ENCODE measurements at regions of chr17 and their contacts with region 1.

Region 1: GRCh38 chr17:75779231-75779986 is 5.2 kb upstream of the UNK start:
- DNase-seq: peak; percentile 97
- H3K4me3 Mint-ChIP-seq: peak overlapping the region; percentile 87
- H3K27ac Mint-ChIP-seq: peak overlapping the region; percentile 97
- H3K4me1 Mint-ChIP-seq: peaks cover 43% of the 10 kb centered on the region
- H3K27me3 Mint-ChIP-seq: peaks cover 4% of the 10 kb centered on the region

Region 2: DNA sequence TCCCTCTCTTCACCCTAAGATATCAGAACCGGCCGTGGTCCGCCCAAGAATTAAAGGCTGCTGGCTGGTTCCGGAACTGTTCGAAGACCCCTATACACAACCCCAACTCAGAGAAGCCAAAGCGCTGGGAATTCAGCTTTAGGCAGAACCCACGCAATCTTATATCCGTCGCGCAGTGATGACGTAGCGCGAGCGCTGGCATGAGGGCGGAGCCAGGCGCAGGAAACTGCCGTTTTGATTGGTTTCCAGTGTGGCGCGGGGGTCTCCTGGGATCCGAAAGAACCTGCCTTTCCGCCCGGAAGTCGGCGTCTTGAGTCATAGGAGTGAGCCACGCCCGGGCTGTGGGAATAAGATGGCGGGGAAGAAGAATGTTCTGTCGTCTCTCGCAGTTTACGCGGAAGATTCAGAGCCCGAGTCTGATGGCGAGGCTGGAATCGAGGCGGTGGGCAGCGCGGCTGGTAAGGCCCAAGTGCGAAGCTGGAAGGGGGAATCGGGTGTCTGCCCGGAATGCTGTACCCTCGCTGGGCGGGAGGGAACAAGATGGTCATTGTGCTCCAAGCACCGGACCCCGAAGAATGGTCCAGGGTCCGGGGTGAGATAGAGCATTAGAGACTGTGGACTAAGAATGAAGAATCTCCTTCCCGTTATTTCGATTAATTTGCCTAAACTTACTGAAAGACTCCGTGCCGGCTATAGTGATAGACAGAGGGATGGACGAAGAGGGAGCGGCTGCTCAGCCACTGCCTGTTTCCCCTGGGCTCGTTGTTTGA is 112.2 kb before region 1 on chr17 and contains the starts of genes RECQL5 and SAP30BP:
- CTCF ChIA-PET with region 1: no interaction called
- POLR2A ChIA-PET with region 1: interaction called, 3 read pairs
- intact Hi-C with region 1: loop called (anchors 1 kb)
- DNase-seq: peak; percentile 98
- H3K4me3 Mint-ChIP-seq: peak within 1 kb of the TSS; percentile 47
- H3K27ac Mint-ChIP-seq: no peak within 1 kb of the TSS
- H3K4me1 Mint-ChIP-seq: peaks cover 25% of the 10 kb centered on the region
- H3K27me3 Mint-ChIP-seq: no peaks in the 10 kb centered on the region
- total RNA-seq, gene RECQL5: 27.7 to 31.3 TPM
- total RNA-seq, gene SAP30BP: 81.4 to 92.7 TPM

Region 3: GRCh38 chr17:75689441-75689873 is 90.0 kb before region 1 on chr17:
- CTCF ChIA-PET with region 1: no interaction called
- POLR2A ChIA-PET with region 1: no interaction called
- intact Hi-C with region 1: no loop called
- DNase-seq: peak; percentile 60
- H3K4me3 Mint-ChIP-seq: no peak overlapping the region
- H3K27ac Mint-ChIP-seq: peak overlapping the region; percentile 78
- H3K4me1 Mint-ChIP-seq: peaks cover 64% of the 10 kb centered on the region
- H3K27me3 Mint-ChIP-seq: no peaks in the 10 kb centered on the region

Region 4: GRCh38 chr17:75764711-75765421 is 14.5 kb before region 1 on chr17 and contains the start of gene GALK1:
- CTCF ChIA-PET with region 1: interaction called, 35 read pairs
- POLR2A ChIA-PET with region 1: interaction called, 69 read pairs
- intact Hi-C with region 1: loop called (anchors 1 kb)
- DNase-seq: peak; percentile 83
- H3K4me3 Mint-ChIP-seq: peak within 1 kb of the TSS; percentile 79
- H3K27ac Mint-ChIP-seq: peak within 1 kb of the TSS; percentile 71
- H3K4me1 Mint-ChIP-seq: peaks cover 11% of the 10 kb centered on the region
- H3K27me3 Mint-ChIP-seq: no peaks in the 10 kb centered on the region
- total RNA-seq, gene GALK1: 69.3 to 69.7 TPM

Region 5: GRCh38 chr17:75822119-75822799 is 42.9 kb after region 1 on chr17:
- CTCF ChIA-PET with region 1: interaction called, 10 read pairs
- POLR2A ChIA-PET with region 1: interaction called, 11 read pairs
- intact Hi-C with region 1: no loop called
- DNase-seq: peak; percentile 52
- H3K4me3 Mint-ChIP-seq: no peak overlapping the region
- H3K27ac Mint-ChIP-seq: peak overlapping the region; percentile 69
- H3K4me1 Mint-ChIP-seq: peaks cover 23% of the 10 kb centered on the region
- H3K27me3 Mint-ChIP-seq: no peaks in the 10 kb centered on the region

Region 6: DNA sequence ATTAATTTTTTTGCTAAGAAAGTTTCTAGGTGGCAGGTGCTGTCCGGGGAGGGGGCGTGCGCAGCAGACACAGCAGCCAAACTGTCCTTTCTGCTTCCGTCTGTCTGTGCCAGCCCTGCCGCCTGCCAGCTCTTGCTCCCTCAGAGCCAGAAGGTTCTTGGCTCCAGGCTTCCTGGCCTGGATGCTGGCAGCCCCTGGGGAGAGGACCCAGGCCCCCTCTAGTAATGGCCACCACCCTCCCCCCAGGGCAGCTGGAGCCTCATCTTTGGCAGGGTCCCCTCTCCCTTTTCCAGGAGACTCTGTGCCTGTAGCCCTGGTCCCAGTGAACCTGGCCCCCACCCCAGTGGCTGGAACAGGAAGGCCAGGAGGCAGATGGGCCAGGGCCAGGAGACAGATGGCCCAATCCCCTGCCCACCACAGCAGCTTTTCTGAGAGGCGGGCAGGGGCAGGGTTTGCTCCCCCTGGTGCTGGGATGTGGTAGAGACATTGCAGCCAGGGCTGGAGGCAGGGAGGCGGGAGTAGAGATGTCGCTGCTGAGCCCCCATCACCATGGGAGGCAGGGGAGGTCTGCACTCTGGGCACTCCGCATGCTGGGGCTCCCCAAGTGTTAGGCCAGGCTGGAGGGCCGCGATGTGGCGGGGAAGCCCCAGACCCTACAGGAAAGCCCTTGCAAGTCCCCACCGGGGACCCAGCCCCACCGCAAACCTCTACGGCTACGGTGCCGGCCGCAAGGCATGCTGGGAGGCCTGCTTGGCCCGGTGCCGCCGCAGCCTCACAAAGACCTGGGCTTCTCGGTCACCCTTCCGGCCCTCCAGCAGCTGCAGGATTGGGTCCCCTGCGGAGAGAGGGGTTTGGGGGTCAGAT is 48.1 kb after region 1 on chr17:
- CTCF ChIA-PET with region 1: interaction called, 10 read pairs
- POLR2A ChIA-PET with region 1: interaction called, 11 read pairs
- intact Hi-C with region 1: loop called (anchors 2 kb)
- DNase-seq: peak; percentile 79
- H3K4me3 Mint-ChIP-seq: peak overlapping the region; percentile 46
- H3K27ac Mint-ChIP-seq: peak overlapping the region; percentile 87
- H3K4me1 Mint-ChIP-seq: peaks cover 15% of the 10 kb centered on the region
- H3K27me3 Mint-ChIP-seq: no peaks in the 10 kb centered on the region

Region 7: DNA sequence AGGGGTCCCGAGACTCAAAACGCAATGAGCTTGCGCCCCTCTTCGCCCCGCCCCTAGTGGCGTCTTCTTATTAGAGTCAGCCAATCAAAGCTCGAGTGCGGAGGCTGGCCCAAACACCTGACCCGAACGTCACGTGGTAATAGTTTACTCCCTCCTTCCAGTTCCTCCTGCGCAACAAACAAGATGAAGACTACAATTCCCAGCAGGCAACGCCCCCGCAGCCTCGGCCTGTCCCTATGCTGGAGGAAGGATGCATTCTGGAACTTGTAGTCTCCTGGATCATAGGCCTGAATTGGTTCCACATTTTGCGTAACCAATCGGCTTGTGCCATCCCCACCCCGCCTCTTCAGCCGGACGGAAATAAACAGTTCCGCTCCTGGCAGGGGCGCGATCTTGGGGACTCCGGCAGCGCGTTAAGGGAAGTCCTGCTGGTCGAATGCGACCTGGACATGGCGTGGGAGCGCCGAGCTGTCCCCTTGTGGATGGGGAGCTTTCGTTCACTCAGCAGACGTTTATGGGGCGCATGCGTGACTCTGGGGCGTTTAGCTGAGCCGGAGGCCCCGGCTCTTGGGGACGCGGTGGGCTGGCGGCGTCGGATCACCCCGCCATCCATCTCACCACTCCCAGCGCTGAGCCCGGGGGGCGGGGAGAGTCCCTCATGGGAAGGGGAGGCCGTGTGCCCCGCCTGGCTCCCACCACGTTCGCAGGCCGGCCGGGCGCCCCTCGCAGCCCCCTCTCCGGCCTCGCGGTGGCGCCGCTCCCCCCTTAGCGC is 76.1 kb after region 1 on chr17 and contains the start of gene WBP2:
- CTCF ChIA-PET with region 1: interaction called, 15 read pairs
- POLR2A ChIA-PET with region 1: interaction called, 7 read pairs
- intact Hi-C with region 1: loop called (anchors 1 kb)
- DNase-seq: peak; percentile 99
- H3K4me3 Mint-ChIP-seq: no peak within 1 kb of the TSS
- H3K27ac Mint-ChIP-seq: peak within 1 kb of the TSS; percentile 86
- H3K4me1 Mint-ChIP-seq: peaks cover 35% of the 10 kb centered on the region
- H3K27me3 Mint-ChIP-seq: no peaks in the 10 kb centered on the region
- total RNA-seq, gene WBP2: 79.1 to 80.6 TPM

Region 8: GRCh38 chr17:75965475-75965874 is 186.1 kb after region 1 on chr17:
- CTCF ChIA-PET with region 1: no interaction called
- POLR2A ChIA-PET with region 1: no interaction called
- intact Hi-C with region 1: no loop called
- DNase-seq: no peak
- H3K4me3 Mint-ChIP-seq: no peak overlapping the region
- H3K27ac Mint-ChIP-seq: no peak overlapping the region
- H3K4me1 Mint-ChIP-seq: peaks cover 2% of the 10 kb centered on the region
- H3K27me3 Mint-ChIP-seq: no peaks in the 10 kb centered on the region

Region 9: DNA sequence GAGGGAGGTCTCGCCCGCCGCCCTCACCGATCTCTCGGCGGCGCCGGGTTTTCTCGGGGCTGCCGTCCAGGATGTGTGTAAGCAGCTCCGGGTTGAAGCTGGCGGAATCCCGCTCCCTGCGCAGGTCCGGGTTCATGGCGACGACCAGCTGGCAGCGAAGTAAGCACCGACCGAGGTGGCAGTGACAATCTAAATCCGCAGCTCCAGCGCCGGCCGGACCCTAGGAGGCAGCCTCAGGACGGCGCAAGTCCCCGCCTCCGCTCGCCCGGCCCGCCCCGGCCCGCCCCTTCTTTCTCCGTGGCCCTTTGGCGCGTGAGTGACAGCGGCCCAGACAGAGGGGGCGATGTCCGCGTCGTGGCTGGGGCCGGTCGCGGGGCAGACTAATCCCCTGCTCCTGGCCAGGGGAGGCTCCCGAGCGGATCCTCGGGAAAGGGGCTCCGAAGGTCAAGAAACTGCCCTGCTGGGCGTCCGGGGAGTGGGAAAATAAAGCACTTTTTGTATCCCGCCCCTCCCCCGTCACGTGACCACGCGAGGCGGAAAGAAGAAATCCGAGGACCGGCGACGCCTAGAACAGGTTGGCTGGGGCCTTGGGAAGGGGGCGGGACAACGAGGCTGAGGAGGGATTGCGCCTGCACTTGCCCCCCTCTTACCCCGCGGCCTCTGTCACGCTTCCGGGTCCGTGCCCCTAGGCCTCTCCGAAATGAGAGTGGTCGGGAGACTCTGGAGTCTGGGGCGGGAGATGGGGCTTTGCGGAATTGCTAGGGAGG is 199.7 kb after region 1 on chr17 and contains the starts of genes ACOX1 and TEN1:
- CTCF ChIA-PET with region 1: no interaction called
- POLR2A ChIA-PET with region 1: no interaction called
- intact Hi-C with region 1: loop called (anchors 2 kb)
- DNase-seq: peak; percentile 97
- H3K4me3 Mint-ChIP-seq: peak within 1 kb of the TSS; percentile 96
- H3K27ac Mint-ChIP-seq: peak within 1 kb of the TSS; percentile 99
- H3K4me1 Mint-ChIP-seq: peaks cover 33% of the 10 kb centered on the region
- H3K27me3 Mint-ChIP-seq: no peaks in the 10 kb centered on the region
- total RNA-seq, gene ACOX1: 34.0 to 35.1 TPM
- total RNA-seq, gene TEN1: 11.4 to 12.3 TPM